GM13976 (cell line): ENCODE measurements at regions of chr18 and their contacts with region 1.

Region 1: DNA sequence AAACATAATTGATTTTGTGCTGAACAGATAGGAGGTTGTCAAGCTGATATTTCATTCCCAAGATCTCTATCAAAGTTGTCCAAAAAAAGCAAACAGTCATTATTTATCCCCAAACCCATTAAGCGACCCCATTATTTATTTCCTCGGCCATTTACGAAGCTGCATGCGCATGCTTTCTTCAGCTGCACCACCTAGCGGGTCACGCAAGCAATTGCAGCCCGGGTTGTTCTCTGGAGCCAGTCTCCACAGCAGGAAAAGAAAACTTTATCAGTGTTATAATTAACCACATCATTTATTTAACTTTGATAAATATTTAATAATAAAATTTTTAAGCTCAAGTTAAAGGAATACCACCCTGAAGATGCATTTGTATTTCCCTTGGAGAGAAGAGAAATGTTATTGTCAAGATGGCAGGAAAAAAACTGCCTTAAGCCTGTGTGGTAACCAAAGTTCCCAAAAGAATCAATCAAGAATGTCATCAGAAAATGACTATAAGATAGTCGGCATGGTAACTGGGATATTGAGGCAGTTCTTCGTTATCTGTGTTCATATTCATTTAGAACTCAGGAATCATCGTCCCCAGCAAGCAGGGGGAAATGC is 304.7 kb downstream of the FBXO15 start:
- DNase-seq: peak; percentile 56
- CTCF ChIP-seq: peak; percentile 86

Region 2: DNA sequence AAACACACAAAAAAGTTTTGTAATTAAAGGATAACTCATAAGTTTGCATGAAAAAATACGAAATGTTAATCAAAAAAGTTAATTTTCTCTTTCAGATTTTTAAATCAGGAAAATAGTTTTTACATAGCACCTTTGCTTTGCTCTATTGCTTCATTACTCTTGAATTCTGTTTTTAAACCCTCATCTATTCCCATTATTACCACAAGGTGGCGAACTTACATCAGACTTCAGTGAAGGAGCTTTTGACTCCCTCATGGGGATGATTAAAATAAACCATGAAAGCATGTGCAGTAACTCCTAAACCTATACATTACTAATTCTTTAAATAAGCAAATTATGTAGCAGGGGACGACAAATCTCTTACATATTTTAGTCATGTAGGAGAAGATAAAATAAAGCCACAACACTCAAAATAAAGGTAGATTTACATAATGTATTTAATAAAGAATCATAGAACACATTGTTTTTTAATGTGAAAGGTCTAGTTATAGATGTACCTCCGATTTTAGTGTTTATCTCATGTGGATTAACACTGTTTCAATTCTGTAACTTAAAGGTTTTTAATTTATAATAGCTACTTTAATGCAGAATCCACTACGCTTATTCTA is 1080.3 kb before region 1 on chr18:
- in situ Hi-C with region 1: loop called (anchors 25 kb)
- DNase-seq: peak; percentile 26
- CTCF ChIP-seq: peak; percentile 57

Region 3: DNA sequence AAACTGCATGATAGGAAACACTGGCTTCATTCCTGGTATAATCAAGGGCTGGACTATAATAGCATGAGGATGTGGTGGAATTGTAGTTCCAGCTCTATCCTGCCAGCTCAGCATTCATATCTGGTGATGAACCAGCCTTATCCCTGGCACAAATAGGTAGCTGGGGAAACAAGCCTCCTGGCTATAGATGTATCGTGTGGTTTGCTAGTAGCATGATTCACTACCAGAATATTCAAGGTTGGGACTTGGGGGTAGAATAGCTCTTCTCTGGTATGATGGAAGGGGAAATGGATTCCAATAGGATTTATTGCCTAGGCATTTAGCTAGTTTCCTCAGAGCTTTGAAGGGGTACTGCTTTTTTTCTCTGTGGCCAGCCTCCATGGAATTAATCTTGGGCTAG is 228.1 kb before region 1 on chr18:
- in situ Hi-C with region 1: no loop called
- DNase-seq: no peak
- CTCF ChIP-seq: no peak

Region 4: DNA sequence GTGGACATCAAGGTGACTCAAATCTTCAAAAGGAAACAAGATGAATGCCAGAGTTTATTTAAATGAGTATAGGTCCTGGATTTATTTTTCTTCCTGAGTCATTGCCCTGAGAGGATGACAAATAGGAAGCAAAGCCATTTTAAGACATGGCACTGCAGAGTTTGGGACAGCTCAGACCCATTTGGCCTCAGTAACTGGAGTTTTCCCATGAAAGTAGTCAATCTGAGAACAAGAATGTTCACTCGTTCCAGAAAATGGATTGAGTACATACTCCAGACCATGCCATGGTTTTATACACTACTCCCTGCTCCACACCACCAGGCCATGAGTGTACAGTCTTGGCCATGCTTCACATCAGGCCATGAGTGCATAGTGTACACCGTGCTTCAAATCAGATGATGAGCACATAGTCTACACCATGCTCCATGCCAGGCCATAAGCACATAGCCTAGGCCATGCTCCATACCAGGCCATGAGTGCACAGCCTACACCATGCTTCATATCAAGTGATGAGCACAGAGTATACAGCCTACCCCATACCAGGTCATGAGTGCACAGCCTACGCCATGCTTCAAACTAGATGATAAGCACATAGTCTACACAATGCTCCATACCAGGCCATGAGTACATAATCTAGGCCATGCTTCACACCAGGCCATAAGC is 102.4 kb after region 1 on chr18:
- in situ Hi-C with region 1: loop called (anchors 25 kb)
- DNase-seq: no peak
- CTCF ChIP-seq: no peak

Region 5: GRCh38 chr18:74023220-74023619 is 180.3 kb after region 1 on chr18:
- in situ Hi-C with region 1: no loop called
- DNase-seq: no peak
- CTCF ChIP-seq: no peak